ENCODE measurements at regions of chr2 and their contacts with region 1.

Region 1: DNA sequence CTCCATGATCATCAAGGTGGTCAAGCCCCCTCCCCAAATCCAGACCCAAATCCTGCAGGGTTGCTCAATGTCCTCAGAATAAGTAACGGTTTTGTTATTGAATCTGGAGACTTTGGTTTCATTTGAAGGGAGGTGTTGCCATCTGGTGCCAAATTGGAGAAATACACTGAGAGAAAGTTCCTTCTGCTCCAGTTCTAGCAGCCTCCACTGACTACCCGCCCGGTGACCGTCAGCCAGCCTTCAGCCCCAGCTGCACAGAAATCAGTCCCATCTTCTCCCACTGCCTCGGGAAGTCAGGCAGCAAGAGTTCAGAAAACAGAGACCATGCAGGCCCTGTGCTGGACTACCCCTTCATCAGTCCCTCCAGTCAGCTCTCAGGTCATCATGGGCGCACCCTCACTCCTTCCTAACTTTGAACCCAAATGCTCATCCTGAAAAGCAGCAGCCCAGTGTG is 38.7 kb downstream of the PKDCC start:
- DNase-seq: peak; percentile 60
- ATAC-seq: peak; percentile 57
- H3K4me3 Mint-ChIP-seq: no peak overlapping the region
- H3K27ac Mint-ChIP-seq: no peak overlapping the region
- H3K4me1 Mint-ChIP-seq: peaks cover 6% of the 10 kb centered on the region
- H3K27me3 Mint-ChIP-seq: no peaks in the 10 kb centered on the region

Region 2: DNA sequence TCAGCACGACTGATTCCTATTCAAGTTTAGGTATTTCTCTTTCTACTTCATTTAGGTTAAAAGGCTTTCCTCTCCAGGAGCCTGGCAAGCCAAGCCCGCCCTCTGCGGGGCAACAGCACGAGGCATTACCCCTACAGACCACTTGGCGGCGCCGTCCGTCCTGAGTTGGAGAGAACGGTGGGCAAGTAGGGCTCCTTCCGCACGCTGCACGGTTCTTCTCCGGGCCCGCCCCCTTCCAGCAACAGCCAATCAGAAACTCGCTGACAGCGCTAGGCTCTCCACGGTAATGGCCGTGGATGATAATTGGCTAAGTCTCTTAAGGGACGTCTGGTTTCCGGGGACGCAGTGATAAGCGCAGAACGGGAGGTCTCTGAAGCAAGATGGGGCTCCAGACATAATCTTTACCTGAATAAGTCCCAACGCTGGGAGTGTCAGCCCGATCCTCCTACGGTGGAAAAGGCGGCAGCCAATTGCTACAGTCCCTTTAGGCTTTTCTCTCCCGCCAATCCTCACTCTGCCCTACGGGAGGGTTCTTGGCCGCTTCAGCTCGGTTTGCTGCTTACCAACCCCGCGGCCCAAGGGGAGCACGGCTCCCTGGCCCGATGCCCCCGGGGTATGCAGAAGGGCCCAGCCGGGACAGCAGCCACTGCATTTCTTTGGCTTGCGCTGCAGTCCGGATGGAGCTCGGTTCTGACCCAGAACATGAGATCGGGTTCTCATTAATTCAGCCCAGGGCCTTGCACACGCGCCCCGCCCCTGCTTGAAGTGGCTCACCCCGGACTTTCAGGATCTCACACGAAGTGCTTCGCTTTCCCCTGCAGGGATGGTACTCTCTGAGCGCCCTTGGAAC is 245.6 kb before region 1 on chr2:
- CTCF ChIA-PET with region 1: interaction called, 31 read pairs
- POLR2A ChIA-PET with region 1: no interaction called
- intact Hi-C with region 1: loop called (anchors 1 kb)
- DNase-seq: peak; percentile 99
- ATAC-seq: peak; percentile 100
- H3K4me3 Mint-ChIP-seq: peak overlapping the region; percentile 84
- H3K27ac Mint-ChIP-seq: peak overlapping the region; percentile 92
- H3K4me1 Mint-ChIP-seq: peaks cover 10% of the 10 kb centered on the region
- H3K27me3 Mint-ChIP-seq: peaks cover 16% of the 10 kb centered on the region

Region 3: DNA sequence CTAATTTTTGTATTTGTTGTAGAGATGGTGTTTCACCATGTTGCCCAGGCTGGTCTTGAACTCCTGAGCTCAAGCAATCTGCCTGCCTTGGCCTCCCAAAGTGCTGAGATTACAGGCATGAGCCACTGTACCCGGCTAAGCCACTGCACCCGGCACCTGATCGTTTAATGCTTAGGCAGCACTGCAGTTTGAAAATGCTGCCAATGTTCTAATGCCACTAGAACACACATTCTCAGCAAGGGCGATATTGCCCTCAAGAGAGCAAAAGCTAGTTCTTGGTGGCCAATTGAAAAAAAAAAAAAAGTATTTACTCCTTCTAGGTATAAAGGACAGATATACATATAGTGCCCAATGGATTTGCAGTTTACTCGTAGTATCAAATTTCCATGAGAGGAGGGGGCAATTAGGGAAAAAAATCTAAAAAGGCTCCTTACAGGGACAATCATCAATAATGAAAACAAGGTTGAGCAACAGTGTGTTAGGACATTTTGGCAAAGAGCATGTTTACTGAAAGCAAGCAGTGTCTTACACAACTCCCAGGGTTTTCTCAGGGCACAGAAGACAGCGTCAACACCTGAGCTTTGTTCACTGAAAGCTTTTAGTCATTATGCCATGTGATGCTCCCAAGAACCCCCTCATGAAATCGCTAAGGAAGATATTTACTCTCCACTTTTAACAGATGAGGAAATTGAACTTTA is 238.6 kb before region 1 on chr2:
- CTCF ChIA-PET with region 1: interaction called, 50 read pairs
- POLR2A ChIA-PET with region 1: no interaction called
- intact Hi-C with region 1: loop called in 1 of 2 experiments (anchors 1 kb)
- DNase-seq: no peak
- ATAC-seq: no peak
- H3K4me3 Mint-ChIP-seq: no peak overlapping the region
- H3K27ac Mint-ChIP-seq: no peak overlapping the region
- H3K4me1 Mint-ChIP-seq: no peaks in the 10 kb centered on the region
- H3K27me3 Mint-ChIP-seq: peaks cover 17% of the 10 kb centered on the region

Region 4: GRCh38 chr2:41853427-41854216 is 232.9 kb before region 1 on chr2:
- CTCF ChIA-PET with region 1: interaction called, 50 read pairs
- POLR2A ChIA-PET with region 1: no interaction called
- intact Hi-C with region 1: loop called in 1 of 2 experiments (anchors 1 kb)
- DNase-seq: peak; percentile 28
- ATAC-seq: peak; percentile 50
- H3K4me3 Mint-ChIP-seq: no peak overlapping the region
- H3K27ac Mint-ChIP-seq: peak overlapping the region; percentile 47
- H3K4me1 Mint-ChIP-seq: peaks cover 17% of the 10 kb centered on the region
- H3K27me3 Mint-ChIP-seq: peaks cover 10% of the 10 kb centered on the region

Region 5: GRCh38 chr2:41869542-41870264 is 216.8 kb before region 1 on chr2:
- CTCF ChIA-PET with region 1: interaction called, 304 read pairs
- POLR2A ChIA-PET with region 1: no interaction called
- intact Hi-C with region 1: loop called (anchors 1 kb)
- DNase-seq: peak; percentile 86
- ATAC-seq: peak; percentile 85
- H3K4me3 Mint-ChIP-seq: no peak overlapping the region
- H3K27ac Mint-ChIP-seq: no peak overlapping the region
- H3K4me1 Mint-ChIP-seq: peaks cover 6% of the 10 kb centered on the region
- H3K27me3 Mint-ChIP-seq: peaks cover 9% of the 10 kb centered on the region

Region 6: GRCh38 chr2:42238644-42239288 is 152.2 kb after region 1 on chr2:
- CTCF ChIA-PET with region 1: interaction called, 19 read pairs
- POLR2A ChIA-PET with region 1: no interaction called
- intact Hi-C with region 1: no loop called
- DNase-seq: peak; percentile 66
- ATAC-seq: peak; percentile 91
- H3K4me3 Mint-ChIP-seq: no peak overlapping the region
- H3K27ac Mint-ChIP-seq: no peak overlapping the region
- H3K4me1 Mint-ChIP-seq: peaks cover 79% of the 10 kb centered on the region
- H3K27me3 Mint-ChIP-seq: no peaks in the 10 kb centered on the region

Region 7: GRCh38 chr2:42328148-42328833 is 241.8 kb after region 1 on chr2:
- CTCF ChIA-PET with region 1: interaction called, 11 read pairs
- POLR2A ChIA-PET with region 1: no interaction called
- intact Hi-C with region 1: no loop called
- DNase-seq: no peak
- ATAC-seq: no peak
- H3K4me3 Mint-ChIP-seq: no peak overlapping the region
- H3K27ac Mint-ChIP-seq: peak overlapping the region; percentile 3
- H3K4me1 Mint-ChIP-seq: peaks cover 16% of the 10 kb centered on the region
- H3K27me3 Mint-ChIP-seq: no peaks in the 10 kb centered on the region